ENCODE measurements at regions of chr2 and their contacts with region 1.

Region 1: DNA sequence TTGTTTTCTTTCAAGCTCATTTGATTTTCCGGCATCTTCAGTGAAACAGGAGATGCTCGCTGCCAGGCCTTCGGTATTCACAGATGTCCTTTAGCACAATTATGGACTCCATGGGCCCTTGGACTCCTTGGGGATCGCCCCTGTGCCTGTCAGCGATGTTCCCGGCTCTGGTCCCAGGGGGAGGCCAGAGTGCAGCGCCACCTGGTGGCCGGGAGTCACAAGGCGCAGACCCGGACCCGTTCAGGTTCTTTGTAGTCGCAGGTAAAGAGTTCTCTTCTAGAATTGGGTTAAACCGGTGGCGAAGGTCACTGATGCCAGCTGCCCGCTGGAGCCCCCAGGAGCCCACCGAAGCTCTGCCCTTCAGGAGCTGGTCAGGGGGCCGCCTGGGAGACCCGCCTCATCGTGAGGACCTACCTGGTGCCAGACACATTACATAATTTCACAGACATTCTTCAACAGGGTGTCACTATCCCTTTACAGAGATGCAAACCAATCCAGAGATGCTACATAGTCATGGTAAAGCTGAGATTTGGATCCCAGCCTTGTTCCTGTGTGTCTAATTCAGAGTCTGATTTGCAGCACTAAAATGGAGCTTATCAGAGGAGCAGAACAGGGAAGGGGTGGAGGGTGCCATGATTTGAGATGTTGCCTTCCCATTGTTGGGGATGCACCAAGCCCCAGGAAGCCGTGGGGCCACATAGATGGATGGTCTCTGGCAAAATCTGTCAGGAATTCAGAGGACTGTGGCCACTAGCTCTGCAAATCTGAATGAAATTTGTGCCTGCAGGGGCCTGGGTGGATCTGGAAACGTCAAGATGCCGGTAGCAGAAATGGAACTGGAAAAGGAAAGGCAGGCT is 6.0 kb upstream of the INPP5D start:
- DNase-seq: peak in 7 of 10 donors; percentile 21 to 79 (median 63)
- H3K4me3 ChIP-seq: peak overlapping the region in 1 of 59 donors; percentile 27
- H3K27ac ChIP-seq: peak overlapping the region in 4 of 59 donors; percentile 7 to 56 (median 18)
- H3K27me3 ChIP-seq: no peaks in the 10 kb centered on the region
- CTCF ChIP-seq: peak; percentile 75 to 99 (median 93)

Region 2: DNA sequence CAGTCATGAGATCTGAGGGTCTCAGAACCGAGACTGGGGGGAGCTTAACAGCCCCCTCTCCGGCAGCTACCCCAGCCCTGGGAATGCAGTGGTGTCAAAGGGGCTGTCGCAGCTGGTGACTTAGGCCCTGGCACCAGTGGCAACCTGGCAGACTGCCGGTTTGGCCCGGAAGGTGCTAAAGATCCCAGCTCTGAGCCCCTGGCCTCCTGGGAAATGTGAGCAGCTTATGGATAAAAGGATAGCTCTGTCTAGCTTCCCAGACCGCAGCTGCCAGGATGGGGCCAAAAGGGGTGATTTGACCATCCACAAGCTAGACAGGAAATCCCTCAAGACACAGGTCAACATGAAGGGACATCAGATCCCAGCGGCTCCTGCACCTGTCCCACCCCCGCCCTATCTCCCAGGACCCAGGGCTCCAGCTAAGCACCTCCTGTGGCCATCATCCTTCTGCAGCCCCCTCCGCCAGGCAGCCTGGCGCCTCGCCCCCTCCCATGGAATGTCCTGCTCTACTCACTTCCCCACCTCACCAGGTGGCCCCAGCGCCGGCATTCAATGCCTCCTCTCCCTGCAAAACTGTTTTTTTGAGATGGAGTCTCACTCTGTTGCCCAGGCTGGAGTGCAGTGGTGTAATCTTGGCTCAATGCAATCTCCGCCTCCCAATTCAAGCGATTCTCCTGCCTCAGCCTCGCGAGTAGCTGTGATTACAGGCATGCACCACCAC is 453.9 kb before region 1 on chr2:
- intact Hi-C with region 1: loop called in 1 of 2 experiments (anchors 5 kb)
- DNase-seq: no peak
- H3K4me3 ChIP-seq: no peak overlapping the region
- H3K27ac ChIP-seq: no peak overlapping the region
- H3K27me3 ChIP-seq: no peaks in the 10 kb centered on the region
- CTCF ChIP-seq: no peak

Region 3: GRCh38 chr2:232854082-232854481 is 200.1 kb before region 1 on chr2:
- intact Hi-C with region 1: loop called (anchors 2 kb)
- DNase-seq: no peak
- H3K4me3 ChIP-seq: no peak overlapping the region
- H3K27ac ChIP-seq: peak overlapping the region in 32 of 59 donors; percentile 1 to 72 (median 46)
- H3K27me3 ChIP-seq: no peaks in the 10 kb centered on the region
- CTCF ChIP-seq: no peak

Region 4: DNA sequence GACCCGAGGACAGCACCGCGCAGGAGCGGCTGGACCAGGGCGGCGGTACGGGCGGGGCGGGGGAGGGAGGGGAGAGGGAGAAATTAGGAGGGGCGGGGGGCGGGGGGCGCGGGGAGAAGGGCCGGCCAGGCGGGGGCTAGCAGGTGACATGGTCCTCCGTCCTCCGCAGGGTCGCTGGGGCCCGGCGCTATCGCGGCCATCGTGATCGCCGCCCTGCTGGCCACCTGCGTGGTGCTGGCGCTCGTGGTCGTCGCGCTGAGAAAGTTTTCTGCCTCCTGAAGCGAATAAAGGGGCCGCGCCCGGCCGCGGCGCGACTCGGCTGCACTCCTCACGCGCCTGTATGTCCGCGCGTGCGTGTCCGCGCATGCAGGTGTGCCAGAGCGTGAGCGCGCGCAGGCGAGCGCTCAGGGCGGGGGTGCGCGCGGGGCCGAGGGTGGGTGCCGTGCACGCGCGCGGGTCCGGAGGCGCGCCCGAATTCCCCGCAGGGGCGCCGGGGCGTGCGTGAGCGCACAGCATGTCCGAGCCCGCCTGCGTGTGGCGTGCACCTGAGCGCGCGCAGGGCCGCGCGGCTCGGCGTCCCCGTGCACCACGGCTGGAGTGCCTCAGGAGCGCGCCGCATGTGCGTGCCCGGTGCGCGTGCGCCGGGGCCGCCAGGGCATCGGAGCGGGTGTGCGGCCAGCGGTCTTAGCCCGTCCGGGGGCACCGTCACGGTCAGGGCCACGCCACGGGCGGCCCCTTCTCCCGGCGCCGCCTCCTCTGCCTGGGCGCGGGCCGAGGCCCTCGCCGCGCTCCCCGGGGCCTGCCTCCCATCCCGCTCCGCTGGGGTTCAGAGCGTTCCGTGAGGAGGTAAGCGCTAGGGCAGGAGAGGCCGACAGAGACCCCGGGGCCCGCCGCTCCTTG is 177.8 kb before region 1 on chr2:
- intact Hi-C with region 1: loop called in 1 of 2 experiments (anchors 5 kb)
- DNase-seq: peak in 6 of 10 donors; percentile 29 to 81 (median 68)
- H3K4me3 ChIP-seq: peak overlapping the region; percentile 39 to 80 (median 62)
- H3K27ac ChIP-seq: peak overlapping the region; percentile 37 to 99 (median 95)
- H3K27me3 ChIP-seq: peaks cover 0 to 4% (median 0%) of the 10 kb centered on the region in 45 donors
- CTCF ChIP-seq: peak in 4 of 56 donors; percentile 8 to 23 (median 10)

Region 5: DNA sequence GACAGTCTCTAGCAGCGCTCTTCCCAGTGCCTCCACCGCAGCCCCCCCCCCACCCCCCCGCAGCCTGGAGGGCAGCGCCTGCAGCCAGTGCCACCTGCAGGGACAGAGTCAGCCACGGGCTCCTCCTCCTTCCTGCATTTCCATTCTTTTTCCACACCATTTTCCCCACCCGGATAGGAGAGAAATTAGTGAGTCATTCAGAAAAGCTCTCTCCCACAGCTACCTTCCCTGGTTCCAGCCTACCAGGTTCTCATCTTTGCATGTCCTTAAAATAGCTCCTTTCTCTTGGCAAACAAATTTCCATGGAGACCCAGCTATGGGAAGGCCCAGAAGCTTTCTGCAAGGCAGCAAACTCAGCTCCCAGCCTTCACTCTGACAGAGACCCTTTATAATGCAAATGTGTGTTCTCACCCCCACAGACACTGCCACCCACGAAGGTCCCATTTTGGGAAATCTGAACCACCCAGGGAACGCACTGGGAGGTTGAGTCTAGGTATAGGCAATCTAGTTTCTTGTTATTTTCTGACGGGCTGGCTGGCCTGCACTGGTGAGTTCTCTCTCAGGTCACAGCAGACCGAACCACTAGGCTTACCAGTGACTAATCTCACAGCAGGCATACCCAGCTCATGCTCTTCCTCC is 155.5 kb after region 1 on chr2:
- intact Hi-C with region 1: loop called in 1 of 2 experiments (anchors 5 kb)
- DNase-seq: peak in 4 of 10 donors; percentile 28 to 61 (median 31)
- H3K4me3 ChIP-seq: no peak overlapping the region
- H3K27ac ChIP-seq: peak overlapping the region in 49 of 59 donors; percentile 4 to 82 (median 58)
- H3K27me3 ChIP-seq: no peaks in the 10 kb centered on the region
- CTCF ChIP-seq: no peak

Region 6: GRCh38 chr2:233225230-233226068 is 171.3 kb after region 1 on chr2:
- intact Hi-C with region 1: loop called in 1 of 2 experiments (anchors 5 kb)
- DNase-seq: no peak
- H3K4me3 ChIP-seq: no peak overlapping the region
- H3K27ac ChIP-seq: no peak overlapping the region
- H3K27me3 ChIP-seq: no peaks in the 10 kb centered on the region
- CTCF ChIP-seq: no peak

Region 7: DNA sequence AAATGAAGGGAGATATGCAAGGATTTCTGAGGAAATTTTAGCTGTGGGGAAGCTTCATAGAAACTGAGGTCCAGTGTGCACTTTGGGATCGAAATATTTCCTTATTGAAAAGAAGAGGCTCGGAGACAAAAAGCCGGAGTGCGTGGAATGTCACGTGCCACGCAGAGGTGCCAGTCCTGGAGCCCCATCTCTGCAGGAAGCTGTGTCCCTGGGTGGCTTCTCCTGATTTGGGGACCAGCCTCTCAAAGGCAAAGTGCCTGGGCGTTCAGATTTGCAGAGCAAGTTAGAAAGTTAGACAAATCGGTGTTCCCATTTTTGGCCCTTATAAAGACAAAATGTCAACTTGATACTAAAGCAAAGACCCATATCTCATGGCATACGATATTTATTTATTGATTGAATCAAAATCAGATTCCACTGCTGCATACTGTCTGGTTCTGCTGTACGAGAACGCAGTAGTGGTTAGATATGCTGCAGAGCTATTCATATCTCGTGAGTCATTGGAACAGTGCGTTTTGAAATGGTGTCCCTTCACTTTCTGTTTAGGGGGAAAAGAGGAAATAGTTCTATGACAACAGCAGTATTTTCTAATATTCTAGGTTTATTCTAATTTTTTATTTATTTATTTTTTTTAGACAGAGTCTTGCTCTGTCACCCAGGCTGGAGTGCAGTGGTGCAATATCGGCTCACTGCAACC is 188.2 kb after region 1 on chr2:
- intact Hi-C with region 1: loop called (anchors 5 kb)
- DNase-seq: peak in 3 of 10 donors; percentile 11 to 40 (median 31)
- H3K4me3 ChIP-seq: peak overlapping the region in 7 of 59 donors; percentile 2 to 26 (median 20)
- H3K27ac ChIP-seq: peak overlapping the region in 30 of 59 donors; percentile 5 to 72 (median 50)
- H3K27me3 ChIP-seq: no peaks in the 10 kb centered on the region
- CTCF ChIP-seq: no peak